ENCODE measurements at regions of chr18 and their contacts with region 1.

Region 1: GRCh38 chr18:45839414-45840395 is 14.2 kb downstream of the SIGLEC15 start:
- DNase-seq: peak; percentile 81 to 90 (median 88)
- H3K4me3 ChIP-seq: no peak overlapping the region
- H3K27ac ChIP-seq: no peak overlapping the region
- H3K4me1 ChIP-seq: peaks cover 7 to 47% (median 42%) of the 10 kb centered on the region in 4 experiments
- H3K27me3 ChIP-seq: peaks cover 0 to 13% (median 2%) of the 10 kb centered on the region in 5 experiments

Region 2: GRCh38 chr18:45690975-45691815 is 148.5 kb before region 1 on chr18:
- CTCF ChIA-PET with region 1: interaction called, 27 read pairs
- POLR2A ChIA-PET with region 1: no interaction called
- DNase-seq: peak; percentile 76 to 87 (median 81)
- H3K4me3 ChIP-seq: no peak overlapping the region
- H3K27ac ChIP-seq: no peak overlapping the region
- H3K4me1 ChIP-seq: peaks cover 20 to 37% (median 29%) of the 10 kb centered on the region in 4 experiments
- H3K27me3 ChIP-seq: no peaks in the 10 kb centered on the region

Region 3: GRCh38 chr18:45828917-45829811 is 10.5 kb before region 1 on chr18:
- CTCF ChIA-PET with region 1: interaction called, 13 read pairs
- POLR2A ChIA-PET with region 1: no interaction called
- DNase-seq: peak in 1 of 3 donors; percentile 58
- H3K4me3 ChIP-seq: peak overlapping the region in 4 of 7 experiments; percentile 4 to 54 (median 33)
- H3K27ac ChIP-seq: peak overlapping the region; percentile 20 to 76
- H3K4me1 ChIP-seq: peaks cover 17 to 83% (median 71%) of the 10 kb centered on the region in 4 experiments
- H3K27me3 ChIP-seq: no peaks in the 10 kb centered on the region

Region 4: DNA sequence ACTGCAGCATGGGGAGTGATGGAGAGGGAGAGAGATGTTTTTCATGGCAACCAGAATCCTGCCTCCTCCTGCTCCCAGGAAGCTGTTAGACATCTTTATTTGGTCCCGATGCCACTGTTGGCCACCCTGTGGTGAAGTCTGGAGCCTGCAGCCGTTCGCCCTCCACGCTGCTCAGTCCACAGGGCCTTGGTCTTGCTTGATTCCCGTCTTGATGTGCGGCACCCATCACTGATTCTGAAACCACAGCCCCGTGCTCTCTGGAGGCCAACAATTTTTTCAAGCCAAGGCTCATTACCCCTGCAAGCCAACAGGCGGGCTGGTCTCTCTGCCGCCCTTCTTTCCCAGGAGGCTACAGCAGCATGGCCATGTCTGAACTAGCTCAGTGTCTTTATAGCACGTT is 10.3 kb after region 1 on chr18:
- CTCF ChIA-PET with region 1: interaction called, 20 read pairs
- POLR2A ChIA-PET with region 1: no interaction called
- DNase-seq: no peak
- H3K4me3 ChIP-seq: no peak overlapping the region
- H3K27ac ChIP-seq: no peak overlapping the region
- H3K4me1 ChIP-seq: peaks cover 0 to 4% (median 0%) of the 10 kb centered on the region in 4 experiments
- H3K27me3 ChIP-seq: no peaks in the 10 kb centered on the region